PC-9 (cell line): ENCODE measurements at regions of chr3 and their contacts with region 1.

Region 1: DNA sequence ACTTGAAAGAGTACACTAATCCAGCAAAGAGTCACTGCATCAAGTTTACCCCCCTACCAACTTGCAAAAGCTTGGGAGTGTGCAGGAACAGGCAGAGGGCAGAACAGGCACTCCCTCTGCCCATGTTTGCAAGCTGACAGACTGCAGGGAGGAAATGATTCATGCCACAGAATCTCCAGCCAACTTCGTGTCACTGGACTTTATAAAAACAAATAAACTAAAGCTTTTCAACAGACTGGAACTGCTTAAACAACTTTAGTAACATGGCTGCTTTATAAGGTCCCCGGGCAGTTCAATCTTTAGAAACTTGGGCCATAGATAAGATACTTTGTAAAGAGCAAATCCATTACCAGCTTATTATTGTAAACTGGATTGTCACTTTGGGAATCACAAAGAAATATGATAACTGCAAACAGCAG is 129.4 kb downstream of the THRB start:
- DNase-seq: peak; percentile 62 to 90
- H3K4me3 ChIP-seq: no peak overlapping the region; the same call in 1 of the 2 replicates
- H3K27ac ChIP-seq: peak overlapping the region; percentile 69
- H3K4me1 ChIP-seq: peaks cover 40% of the 10 kb centered on the region
- H3K27me3 ChIP-seq: no peaks in the 10 kb centered on the region
- CTCF ChIP-seq: no peak

Region 2: DNA sequence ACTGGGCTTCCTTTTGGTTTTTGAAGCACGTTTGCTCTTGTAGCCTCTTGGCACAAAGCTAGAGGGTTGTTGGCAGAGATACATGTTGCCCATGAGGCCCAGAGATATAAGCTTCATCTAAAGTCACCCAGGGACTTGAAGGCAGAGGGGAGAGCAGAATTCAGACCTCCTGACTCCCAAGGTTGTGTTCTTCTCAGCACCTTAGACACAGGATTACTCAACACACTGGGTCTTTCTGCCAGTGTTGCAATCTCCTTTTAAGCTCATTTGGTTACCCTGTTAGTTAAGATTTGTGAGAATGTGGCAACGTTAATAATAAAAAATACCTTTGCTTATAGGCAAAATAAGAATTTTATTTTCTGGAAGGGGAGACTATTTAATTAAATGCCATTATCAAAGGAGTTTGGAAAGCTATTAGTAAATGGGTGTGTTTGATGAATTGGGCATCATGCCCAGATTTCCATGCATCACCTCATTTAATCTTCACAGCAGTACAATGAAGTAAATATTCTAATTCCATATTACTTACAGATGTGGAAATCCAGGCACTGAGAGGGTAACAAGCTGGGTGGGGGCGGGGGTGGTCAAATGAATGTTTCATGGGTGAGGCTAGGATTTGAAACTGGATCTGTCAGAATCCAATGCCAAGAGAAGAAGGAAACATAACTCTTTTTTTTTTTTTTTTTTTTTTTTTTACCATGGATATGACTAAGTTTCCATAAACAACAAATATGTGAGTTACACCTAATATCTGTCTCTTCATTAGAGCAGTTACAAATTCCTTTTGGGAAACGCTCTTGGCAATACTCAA is 236.8 kb before region 1 on chr3:
- CTCF ChIA-PET with region 1: no interaction called
- POLR2A ChIA-PET with region 1: no interaction called
- intact Hi-C with region 1: no loop called
- DNase-seq: peak; percentile 19 to 76
- H3K4me3 ChIP-seq: no peak overlapping the region
- H3K27ac ChIP-seq: peak overlapping the region; percentile 49
- H3K4me1 ChIP-seq: peaks cover 23% of the 10 kb centered on the region
- H3K27me3 ChIP-seq: no peaks in the 10 kb centered on the region
- CTCF ChIP-seq: no peak

Region 3: GRCh38 chr3:24640330-24640877 is 275.2 kb after region 1 on chr3:
- CTCF ChIA-PET with region 1: no interaction called
- POLR2A ChIA-PET with region 1: no interaction called
- intact Hi-C with region 1: loop called (anchors 5 kb)
- DNase-seq: peak in 1 of 2 experiments; percentile 6
- H3K4me3 ChIP-seq: no peak overlapping the region
- H3K27ac ChIP-seq: no peak overlapping the region
- H3K4me1 ChIP-seq: no peaks in the 10 kb centered on the region
- H3K27me3 ChIP-seq: no peaks in the 10 kb centered on the region
- CTCF ChIP-seq: peak; percentile 65